Panc1 (cell line): ENCODE measurements at regions of chr12 and their contacts with region 1.

Region 1: GRCh38 chr12:74317078-74317601 is 220.5 kb upstream of the ATXN7L3B start:
- DNase-seq: no peak
- ATAC-seq: peak; percentile 88
- H3K4me3 ChIP-seq: no peak overlapping the region
- H3K27ac ChIP-seq: no peak overlapping the region
- H3K4me1 ChIP-seq: no peaks in the 10 kb centered on the region
- H3K27me3 ChIP-seq: no peaks in the 10 kb centered on the region
- CTCF ChIP-seq: peak; percentile 52

Region 2: GRCh38 chr12:74021937-74022336 is 295.2 kb before region 1 on chr12:
- CTCF ChIA-PET with region 1: no interaction called
- POLR2A ChIA-PET with region 1: no interaction called
- in situ Hi-C with region 1: no loop called
- intact Hi-C with region 1: loop called (anchors 5 kb)
- DNase-seq: peak; percentile 42
- ATAC-seq: peak; percentile 97
- H3K4me3 ChIP-seq: no peak overlapping the region
- H3K27ac ChIP-seq: no peak overlapping the region
- H3K4me1 ChIP-seq: no peaks in the 10 kb centered on the region
- H3K27me3 ChIP-seq: no peaks in the 10 kb centered on the region
- CTCF ChIP-seq: peak; percentile 83